Activated naive CD4-positive, alpha-beta T cell treated with anti-CD3 and anti-CD28 coated beads for 36 hours (primary cell): ENCODE measurements at regions of chr6 and their contacts with region 1.

Region 1: GRCh38 chr6:75934643-75935472 is 137.6 kb downstream of the IMPG1 start:
- DNase-seq: peak; percentile 36
- H3K4me3 Mint-ChIP-seq: peak overlapping the region; percentile 8
- H3K27ac Mint-ChIP-seq: no peak overlapping the region
- H3K4me1 Mint-ChIP-seq: peaks cover 4% of the 10 kb centered on the region
- H3K27me3 Mint-ChIP-seq: peaks cover 31% of the 10 kb centered on the region

Region 2: DNA sequence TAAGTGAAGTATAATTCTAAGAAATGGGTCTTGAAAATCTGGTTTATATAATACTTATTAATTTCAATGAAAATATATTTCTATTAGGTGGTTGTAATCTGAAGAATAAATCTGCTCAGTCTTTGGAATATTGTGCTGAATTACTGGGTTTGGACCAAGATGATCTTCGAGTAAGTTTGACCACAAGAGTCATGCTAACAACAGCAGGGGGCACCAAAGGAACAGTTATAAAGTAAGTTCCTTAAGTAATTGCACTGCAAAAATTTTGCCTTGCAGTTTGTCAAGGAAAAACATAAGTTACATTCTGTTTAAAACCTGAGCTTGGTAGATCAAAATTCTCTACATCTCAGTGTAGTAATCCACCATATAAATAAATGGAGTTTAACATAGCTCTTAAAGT is 79.8 kb before region 1 on chr6:
- CTCF ChIA-PET with region 1: no interaction called
- intact Hi-C with region 1: loop called (anchors 10 kb)
- DNase-seq: peak; percentile 46
- H3K4me3 Mint-ChIP-seq: no peak overlapping the region
- H3K27ac Mint-ChIP-seq: no peak overlapping the region
- H3K4me1 Mint-ChIP-seq: no peaks in the 10 kb centered on the region
- H3K27me3 Mint-ChIP-seq: peaks cover 8% of the 10 kb centered on the region

Region 3: GRCh38 chr6:75893058-75893775 is 41.6 kb before region 1 on chr6:
- CTCF ChIA-PET with region 1: interaction called, 17 read pairs
- intact Hi-C with region 1: loop called (anchors 1 kb)
- DNase-seq: no peak
- H3K4me3 Mint-ChIP-seq: no peak overlapping the region
- H3K27ac Mint-ChIP-seq: no peak overlapping the region
- H3K4me1 Mint-ChIP-seq: no peaks in the 10 kb centered on the region
- H3K27me3 Mint-ChIP-seq: no peaks in the 10 kb centered on the region

Region 4: GRCh38 chr6:76682842-76683241 is 748.0 kb after region 1 on chr6:
- CTCF ChIA-PET with region 1: no interaction called
- intact Hi-C with region 1: loop called (anchors 10 kb)
- DNase-seq: no peak
- H3K4me3 Mint-ChIP-seq: no peak overlapping the region
- H3K27ac Mint-ChIP-seq: no peak overlapping the region
- H3K4me1 Mint-ChIP-seq: no peaks in the 10 kb centered on the region
- H3K27me3 Mint-ChIP-seq: no peaks in the 10 kb centered on the region

Region 5: GRCh38 chr6:76861403-76861802 is 926.5 kb after region 1 on chr6:
- CTCF ChIA-PET with region 1: interaction called, 3 read pairs
- intact Hi-C with region 1: loop called (anchors 5 kb)
- DNase-seq: peak; percentile 5
- H3K4me3 Mint-ChIP-seq: no peak overlapping the region
- H3K27ac Mint-ChIP-seq: no peak overlapping the region
- H3K4me1 Mint-ChIP-seq: no peaks in the 10 kb centered on the region
- H3K27me3 Mint-ChIP-seq: no peaks in the 10 kb centered on the region

Region 6: DNA sequence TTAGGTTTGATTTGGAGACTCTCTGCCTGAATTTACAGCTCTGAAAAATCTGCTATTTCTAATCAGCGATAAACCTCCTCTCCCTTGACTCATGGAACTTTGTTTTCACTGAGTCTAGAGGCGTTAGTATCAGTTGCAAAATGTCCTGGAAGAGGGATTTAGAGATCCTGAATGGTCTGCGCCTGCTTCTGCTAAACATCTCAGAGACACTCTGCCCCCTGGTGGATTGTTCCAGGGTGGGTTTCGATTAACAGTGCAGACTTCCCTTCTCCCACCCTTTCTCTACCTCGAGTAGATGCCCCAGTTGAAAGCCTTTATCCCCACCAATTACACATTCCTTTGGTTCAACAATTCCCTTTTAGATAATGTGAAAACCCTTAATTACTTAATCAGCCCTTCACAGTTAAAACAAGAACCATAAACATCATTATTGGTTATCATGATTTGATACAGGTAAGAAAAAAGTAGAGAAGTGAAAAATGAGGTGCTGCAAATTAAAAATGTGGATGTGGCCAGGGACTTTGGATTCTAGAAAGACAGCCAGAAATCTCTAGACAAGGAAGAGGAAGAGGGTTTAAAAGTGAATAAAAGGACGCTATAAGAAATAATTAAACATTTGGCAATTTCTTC is 1523.0 kb after region 1 on chr6:
- CTCF ChIA-PET with region 1: no interaction called
- intact Hi-C with region 1: loop called (anchors 1 kb)
- DNase-seq: peak; percentile 62
- H3K4me3 Mint-ChIP-seq: no peak overlapping the region
- H3K27ac Mint-ChIP-seq: no peak overlapping the region
- H3K4me1 Mint-ChIP-seq: peaks cover 6% of the 10 kb centered on the region
- H3K27me3 Mint-ChIP-seq: peaks cover 30% of the 10 kb centered on the region